H1 (cell line): ENCODE measurements at regions of chr10 and their contacts with region 1.

Region 1: GRCh38 chr10:114513381-114513792 is 109.1 kb upstream of the AFAP1L2 start:
- DNase-seq: no peak
- H3K4me3 ChIP-seq: no peak overlapping the region
- H3K27ac ChIP-seq: no peak overlapping the region
- H3K4me1 ChIP-seq: peaks cover 0 to 3% (median 0%) of the 10 kb centered on the region in 4 experiments; a peak in 3 of 7 replicates
- H3K27me3 ChIP-seq: no peaks in the 10 kb centered on the region
- CTCF ChIP-seq: no peak
- EP300 ChIP-seq: no peak
- POLR2A ChIP-seq: no peak
- RAD21 ChIP-seq: no peak

Region 2: DNA sequence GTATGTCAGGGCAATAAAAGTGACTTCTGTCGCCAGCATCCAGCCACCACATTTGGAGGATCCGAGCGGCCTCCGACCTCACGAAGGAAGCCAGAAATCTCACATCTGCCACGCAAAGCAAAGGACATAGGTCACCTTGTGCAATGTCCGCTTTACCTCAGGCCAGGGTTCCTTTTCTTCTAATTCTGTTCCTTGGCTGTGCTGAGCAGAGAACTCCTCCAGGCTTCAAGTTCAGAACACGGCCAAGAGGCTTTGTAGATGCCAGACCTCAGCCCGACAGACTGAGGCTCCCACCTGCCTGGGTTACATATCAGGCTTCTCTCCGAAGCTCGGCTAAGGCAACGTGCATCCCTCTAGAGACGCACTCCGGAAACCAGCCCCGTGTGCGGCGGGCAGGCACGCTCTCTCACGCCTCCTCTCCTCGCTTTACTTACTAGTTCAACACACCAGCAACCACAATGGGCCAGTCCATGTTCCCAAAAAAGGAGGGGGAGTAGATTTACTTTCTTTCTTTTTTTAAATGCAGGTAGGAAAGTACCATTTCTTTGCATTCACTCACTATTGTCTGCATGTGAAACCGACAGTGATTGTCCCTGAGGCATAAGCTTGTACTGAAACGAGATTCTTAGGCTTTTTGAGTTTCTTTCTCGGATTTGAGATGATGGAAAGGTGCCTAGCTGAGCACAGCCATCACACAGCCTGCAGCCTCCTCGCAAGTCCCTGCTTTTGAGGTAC is 13.3 kb after region 1 on chr10:
- CTCF ChIA-PET with region 1: interaction called, 16 read pairs
- POLR2A ChIA-PET with region 1: interaction called, 10 read pairs
- DNase-seq: peak; percentile 77 to 83
- H3K4me3 ChIP-seq: peak overlapping the region; percentile 45 to 73 (median 66)
- H3K27ac ChIP-seq: peak overlapping the region; percentile 26
- H3K4me1 ChIP-seq: peaks cover 3 to 23% (median 9%) of the 10 kb centered on the region in 4 experiments; a peak in 5 of 7 replicates
- H3K27me3 ChIP-seq: no peaks in the 10 kb centered on the region
- CTCF ChIP-seq: no peak
- EP300 ChIP-seq: peak in 1 of 2 experiments; percentile 97; a peak in 2 of 3 replicates
- POLR2A ChIP-seq: peak; percentile 66 to 91
- RAD21 ChIP-seq: no peak